ENCODE measurements at regions of chr16 and their contacts with region 1.

Region 1: GRCh38 chr16:80759419-80760162 is 44.8 kb downstream of the CDYL2 start:
- DNase-seq: no peak
- H3K4me3 Mint-ChIP-seq: peak overlapping the region; percentile 23
- H3K27ac Mint-ChIP-seq: peak overlapping the region; percentile 67
- H3K4me1 Mint-ChIP-seq: peaks cover 44% of the 10 kb centered on the region
- H3K27me3 Mint-ChIP-seq: no peaks in the 10 kb centered on the region

Region 2: DNA sequence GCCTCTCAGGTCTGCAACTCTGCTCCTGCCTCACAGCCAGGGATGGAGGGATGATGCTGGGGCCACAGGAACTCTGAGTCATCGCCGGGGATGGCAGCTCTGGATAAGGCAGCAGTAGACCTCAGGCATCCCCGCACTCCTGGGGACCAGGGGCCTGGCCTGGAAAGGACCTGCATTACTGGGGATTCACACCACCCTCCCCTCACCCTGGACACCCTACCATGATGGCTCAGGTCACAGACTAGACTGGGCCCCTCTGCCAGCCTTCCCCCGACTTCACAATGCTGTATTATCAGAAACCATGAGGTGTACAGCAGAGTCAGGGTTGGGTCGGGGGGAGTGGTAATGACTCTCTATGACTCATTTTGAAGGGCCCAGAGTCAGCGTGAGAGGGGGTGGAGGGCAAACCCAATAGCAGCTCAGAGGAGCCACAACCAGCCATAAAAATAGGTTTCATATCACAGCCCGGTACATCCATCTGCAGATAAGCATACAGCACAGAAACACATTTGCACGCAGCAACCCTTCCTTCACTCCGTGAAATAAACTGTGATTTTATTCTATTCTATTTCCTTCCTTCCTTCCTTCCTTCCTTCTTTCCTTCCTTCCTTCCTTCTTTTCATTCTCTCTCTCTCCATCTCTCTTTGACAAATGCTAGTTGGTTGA is 190.0 kb before region 1 on chr16:
- intact Hi-C with region 1: loop called (anchors 1 kb)
- DNase-seq: peak; percentile 74
- H3K4me3 Mint-ChIP-seq: peak overlapping the region; percentile 51
- H3K27ac Mint-ChIP-seq: peak overlapping the region; percentile 93
- H3K4me1 Mint-ChIP-seq: peaks cover 60% of the 10 kb centered on the region
- H3K27me3 Mint-ChIP-seq: no peaks in the 10 kb centered on the region

Region 3: GRCh38 chr16:80682421-80683070 is 77.0 kb before region 1 on chr16:
- intact Hi-C with region 1: loop called (anchors 1 kb)
- DNase-seq: no peak
- H3K4me3 Mint-ChIP-seq: no peak overlapping the region
- H3K27ac Mint-ChIP-seq: no peak overlapping the region
- H3K4me1 Mint-ChIP-seq: peaks cover 37% of the 10 kb centered on the region
- H3K27me3 Mint-ChIP-seq: no peaks in the 10 kb centered on the region

Region 4: GRCh38 chr16:80744856-80745255 is 14.7 kb before region 1 on chr16:
- intact Hi-C with region 1: loop called (anchors 1 kb)
- DNase-seq: no peak
- H3K4me3 Mint-ChIP-seq: no peak overlapping the region
- H3K27ac Mint-ChIP-seq: no peak overlapping the region
- H3K4me1 Mint-ChIP-seq: peaks cover 57% of the 10 kb centered on the region
- H3K27me3 Mint-ChIP-seq: no peaks in the 10 kb centered on the region

Region 5: GRCh38 chr16:81006814-81007696 is 247.5 kb after region 1 on chr16 and contains the starts of genes CENPN and CMC2:
- intact Hi-C with region 1: loop called (anchors 1 kb)
- DNase-seq: peak; percentile 97
- H3K4me3 Mint-ChIP-seq: peak within 1 kb of the TSS; percentile 100
- H3K27ac Mint-ChIP-seq: peak within 1 kb of the TSS; percentile 100
- H3K4me1 Mint-ChIP-seq: peaks cover 61% of the 10 kb centered on the region
- H3K27me3 Mint-ChIP-seq: peaks cover 2% of the 10 kb centered on the region
- total RNA-seq, gene CENPN: 65.6 and 67.8 TPM in 2 replicates
- total RNA-seq, gene CMC2: 141 and 156 TPM in 2 replicates